ENCODE measurements at regions of chr9 and their contacts with region 1.

Region 1: DNA sequence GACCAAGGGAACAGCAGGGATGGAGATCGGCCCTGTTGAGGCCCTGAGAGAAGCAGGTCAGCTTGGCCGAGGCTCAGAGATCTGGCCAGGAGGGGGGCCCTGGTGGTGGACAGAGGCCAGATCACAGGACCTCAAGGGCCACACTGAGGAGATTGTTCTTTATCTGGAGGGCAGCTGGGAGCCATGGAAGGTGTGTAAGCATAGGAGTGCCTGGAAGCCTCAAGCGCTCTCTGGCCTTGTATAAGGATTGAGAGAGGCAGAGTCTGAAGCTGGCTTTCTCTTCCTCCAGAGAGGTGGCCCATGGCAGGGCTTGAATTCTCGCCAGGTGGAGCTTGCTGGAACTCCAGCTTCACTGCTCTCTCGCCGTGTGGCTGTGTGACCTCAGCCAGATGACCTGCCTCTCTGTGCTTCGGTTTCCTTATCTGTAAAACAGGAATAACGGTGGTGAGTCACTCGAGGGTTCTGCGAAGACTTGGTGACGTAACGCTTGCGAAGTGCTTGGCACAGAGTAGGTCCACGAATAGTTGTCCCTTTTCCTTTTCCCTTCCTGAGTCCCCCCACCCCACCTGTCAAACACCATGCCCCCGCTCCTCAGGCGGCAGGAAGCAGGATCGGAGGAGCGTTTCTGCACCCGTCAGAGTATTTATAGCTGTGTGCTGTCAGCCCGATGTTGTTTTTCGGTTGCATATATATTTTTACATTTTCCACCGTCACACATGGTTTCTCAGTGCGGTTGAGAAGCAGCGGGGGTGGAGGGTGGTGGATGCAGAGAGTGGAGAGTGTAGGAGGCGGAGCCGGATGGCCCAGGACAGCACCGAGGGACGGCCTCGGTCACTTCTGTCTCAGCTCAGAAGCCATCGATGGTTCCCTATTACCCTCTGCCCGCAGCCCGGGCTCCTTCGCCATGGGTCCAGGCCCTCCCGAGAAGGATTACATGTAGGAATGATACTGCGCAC is 17.0 kb upstream of the CRB2 start:
- DNase-seq: peak; percentile 94
- ATAC-seq: peak; percentile 75
- H3K4me3 Mint-ChIP-seq: peak overlapping the region; percentile 74
- H3K27ac Mint-ChIP-seq: peak overlapping the region; percentile 99
- H3K4me1 Mint-ChIP-seq: peaks cover 46% of the 10 kb centered on the region
- H3K27me3 Mint-ChIP-seq: no peaks in the 10 kb centered on the region
- CTCF ChIP-seq: no peak

Region 2: GRCh38 chr9:123305879-123306278 is 33.1 kb before region 1 on chr9:
- CTCF ChIA-PET with region 1: interaction called, 12 read pairs
- POLR2A ChIA-PET with region 1: interaction called, 5 read pairs
- intact Hi-C with region 1: loop called (anchors 2 kb)
- DNase-seq: no peak
- ATAC-seq: no peak
- H3K4me3 Mint-ChIP-seq: no peak overlapping the region
- H3K27ac Mint-ChIP-seq: no peak overlapping the region
- H3K4me1 Mint-ChIP-seq: peaks cover 39% of the 10 kb centered on the region
- H3K27me3 Mint-ChIP-seq: peaks cover 1% of the 10 kb centered on the region
- CTCF ChIP-seq: no peak

Region 3: GRCh38 chr9:123322273-123323195 is 16.5 kb before region 1 on chr9:
- CTCF ChIA-PET with region 1: interaction called, 4 read pairs
- POLR2A ChIA-PET with region 1: interaction called, 26 read pairs
- intact Hi-C with region 1: loop called (anchors 2 kb)
- DNase-seq: peak; percentile 89
- ATAC-seq: peak; percentile 90
- H3K4me3 Mint-ChIP-seq: peak overlapping the region; percentile 54
- H3K27ac Mint-ChIP-seq: peak overlapping the region; percentile 96
- H3K4me1 Mint-ChIP-seq: peaks cover 52% of the 10 kb centered on the region
- H3K27me3 Mint-ChIP-seq: no peaks in the 10 kb centered on the region
- CTCF ChIP-seq: no peak

Measured in activated CD8-positive, alpha-beta T cell treated with anti-CD3 and anti-CD28 coated beads for 36 hours (primary cell).